Transverse colon (tissue), 4 donors: ENCODE measurements at regions of chr12 and their contacts with region 1.

Region 1: GRCh38 chr12:30000401-30000800 is 216.7 kb upstream of the TMTC1 start:
- DNase-seq: no peak
- H3K4me3 ChIP-seq: no peak overlapping the region
- H3K27ac ChIP-seq: no peak overlapping the region
- H3K4me1 ChIP-seq: no peaks in the 10 kb centered on the region
- H3K27me3 ChIP-seq: no peaks in the 10 kb centered on the region
- CTCF ChIP-seq: no peak
- EP300 ChIP-seq: no peak
- POLR2A ChIP-seq: no peak

Region 2: GRCh38 chr12:29662734-29663323 is 337.6 kb before region 1 on chr12:
- in situ Hi-C with region 1: no loop called
- intact Hi-C with region 1: loop called (anchors 5 kb)
- DNase-seq: no peak
- H3K4me3 ChIP-seq: no peak overlapping the region
- H3K27ac ChIP-seq: no peak overlapping the region
- H3K4me1 ChIP-seq: peaks cover 0 to 3% (median 0%) of the 10 kb centered on the region in 4 donors
- H3K27me3 ChIP-seq: no peaks in the 10 kb centered on the region
- CTCF ChIP-seq: no peak
- EP300 ChIP-seq: no peak
- POLR2A ChIP-seq: no peak

Region 3: GRCh38 chr12:29957835-29958234 is 42.6 kb before region 1 on chr12:
- in situ Hi-C with region 1: no loop called
- intact Hi-C with region 1: no loop called
- DNase-seq: no peak
- H3K4me3 ChIP-seq: no peak overlapping the region
- H3K27ac ChIP-seq: no peak overlapping the region
- H3K4me1 ChIP-seq: no peaks in the 10 kb centered on the region
- H3K27me3 ChIP-seq: no peaks in the 10 kb centered on the region
- CTCF ChIP-seq: no peak
- EP300 ChIP-seq: no peak
- POLR2A ChIP-seq: no peak